Activated T-helper 2 cell treated with anti-CD3 and anti-CD28 coated beads, Interferon-gamma antibody, Interleukin-2, Interleukin-4, amounts not matched to agents 10 μg/mL and 5 μg/mL and 100 μg/mL, durations not matched to agents 14 hours and 24 hours and 36 hours (primary cell): ENCODE measurements at regions of chr1 and their contacts with region 1.

Region 1: DNA sequence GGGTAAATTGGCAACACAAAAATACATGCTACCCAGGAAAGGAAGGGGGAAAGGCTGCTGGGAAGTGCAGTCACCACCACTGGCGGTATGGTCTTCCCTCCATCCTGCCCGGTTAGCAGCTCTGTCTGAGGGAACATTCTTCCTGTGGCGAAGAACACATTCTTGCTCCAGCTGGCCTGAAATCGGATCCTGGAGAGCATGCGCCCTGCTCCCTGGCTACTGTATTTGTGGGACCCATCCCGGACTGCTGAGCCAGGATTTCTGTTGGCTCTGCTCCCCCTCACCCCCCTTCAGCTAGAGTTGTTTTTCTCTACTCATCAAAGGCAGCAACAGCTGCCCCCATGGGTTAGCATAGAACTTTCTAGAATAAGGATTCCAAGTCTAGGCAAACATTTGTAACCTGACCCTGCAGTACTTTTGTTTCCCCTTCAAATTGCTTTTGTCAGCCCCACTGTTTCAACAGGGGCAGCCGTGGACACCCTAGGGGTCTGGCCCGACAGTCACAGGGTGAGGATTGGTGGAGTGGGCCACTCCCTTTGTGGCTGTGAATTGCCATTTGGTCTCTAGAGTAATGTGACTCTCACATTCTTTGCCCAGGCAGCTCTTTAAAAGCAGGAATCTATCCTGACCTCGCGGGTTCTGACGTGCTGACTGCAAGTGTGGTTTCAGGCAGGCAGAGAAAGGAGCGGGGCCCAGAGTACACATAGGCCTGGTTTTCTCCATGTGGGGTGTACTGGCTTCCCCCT is 157.7 kb downstream of the TOMM20 start:
- DNase-seq: no peak
- H3K4me3 Mint-ChIP-seq: no peak overlapping the region
- H3K27ac Mint-ChIP-seq: peak overlapping the region; percentile 85
- H3K4me1 Mint-ChIP-seq: peaks cover 66% of the 10 kb centered on the region
- H3K27me3 Mint-ChIP-seq: no peaks in the 10 kb centered on the region

Region 2: DNA sequence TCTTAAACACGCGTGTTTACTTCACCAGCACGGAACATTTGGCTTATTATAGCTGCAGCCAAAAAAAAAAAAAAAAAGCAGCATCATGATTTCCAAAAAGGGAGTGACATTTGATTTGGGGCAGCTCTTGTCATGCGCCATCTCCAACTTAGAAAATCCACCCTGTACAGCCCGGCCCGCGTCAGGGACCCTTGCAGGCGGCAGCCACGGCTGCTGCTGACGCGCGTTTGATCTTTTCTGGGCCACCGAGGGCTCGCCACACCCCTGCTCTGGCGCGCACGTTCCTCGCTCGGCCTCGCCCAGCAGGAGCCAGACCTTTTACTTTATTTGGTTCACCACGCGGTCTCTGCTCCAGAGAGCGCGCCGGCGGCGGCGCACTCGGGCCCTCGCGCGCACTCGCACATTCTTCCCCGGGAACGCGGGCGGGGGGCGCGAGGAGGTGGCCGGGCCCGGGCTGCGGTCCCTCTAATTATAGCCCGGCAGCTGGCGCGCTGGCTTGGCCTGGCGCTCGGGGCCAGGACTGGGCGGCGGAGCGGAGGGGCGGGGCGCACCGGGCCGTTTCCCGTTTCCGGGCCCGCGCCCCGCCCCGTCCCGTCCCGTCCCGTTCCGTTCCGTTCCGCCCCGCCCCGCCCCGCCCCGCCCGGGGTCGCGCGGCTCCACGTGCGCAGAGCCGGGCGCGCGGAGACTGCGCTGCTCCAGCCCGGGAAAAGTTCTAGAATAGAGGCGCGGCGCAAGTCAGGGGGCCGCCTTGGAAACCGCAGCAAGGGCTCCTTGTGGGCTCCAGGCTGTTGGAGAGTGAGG is 371.1 kb before region 1 on chr1:
- intact Hi-C with region 1: loop called (anchors 2 kb)
- DNase-seq: peak; percentile 70
- H3K4me3 Mint-ChIP-seq: peak overlapping the region; percentile 82
- H3K27ac Mint-ChIP-seq: peak overlapping the region; percentile 92
- H3K4me1 Mint-ChIP-seq: peaks cover 53% of the 10 kb centered on the region
- H3K27me3 Mint-ChIP-seq: no peaks in the 10 kb centered on the region

Region 3: GRCh38 chr1:234862944-234863515 is 107.9 kb before region 1 on chr1:
- intact Hi-C with region 1: no loop called
- DNase-seq: no peak
- H3K4me3 Mint-ChIP-seq: no peak overlapping the region
- H3K27ac Mint-ChIP-seq: no peak overlapping the region
- H3K4me1 Mint-ChIP-seq: peaks cover 30% of the 10 kb centered on the region
- H3K27me3 Mint-ChIP-seq: no peaks in the 10 kb centered on the region

Region 4: GRCh38 chr1:234987415-234988154 is 16.7 kb after region 1 on chr1:
- intact Hi-C with region 1: loop called (anchors 1 kb)
- DNase-seq: no peak
- H3K4me3 Mint-ChIP-seq: peak overlapping the region; percentile 51
- H3K27ac Mint-ChIP-seq: peak overlapping the region; percentile 97
- H3K4me1 Mint-ChIP-seq: peaks cover 72% of the 10 kb centered on the region
- H3K27me3 Mint-ChIP-seq: no peaks in the 10 kb centered on the region

Region 5: DNA sequence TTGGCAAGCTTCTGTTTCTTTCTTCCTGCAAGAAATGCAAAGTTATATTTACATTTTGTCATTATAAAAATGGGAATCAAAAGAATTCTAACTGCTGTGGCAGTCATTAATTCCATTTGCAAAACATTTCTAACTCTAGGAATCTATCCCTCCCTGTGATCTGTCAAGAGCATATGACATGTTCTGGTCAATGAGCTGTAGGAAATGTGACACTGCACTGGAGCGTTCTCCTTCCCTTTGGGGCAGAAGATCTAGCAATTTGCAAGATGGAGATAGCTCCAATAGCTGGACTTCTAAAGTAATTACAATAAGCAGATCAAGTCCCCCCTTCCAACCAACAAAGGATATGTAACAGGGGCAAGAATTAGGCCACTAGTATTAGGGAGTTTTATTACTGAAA is 151.4 kb after region 1 on chr1:
- intact Hi-C with region 1: no loop called
- DNase-seq: no peak
- H3K4me3 Mint-ChIP-seq: no peak overlapping the region
- H3K27ac Mint-ChIP-seq: peak overlapping the region; percentile 62
- H3K4me1 Mint-ChIP-seq: peaks cover 42% of the 10 kb centered on the region
- H3K27me3 Mint-ChIP-seq: no peaks in the 10 kb centered on the region